GM10248 (cell line): ENCODE measurements at regions of chr17 and their contacts with region 1.

Region 1: DNA sequence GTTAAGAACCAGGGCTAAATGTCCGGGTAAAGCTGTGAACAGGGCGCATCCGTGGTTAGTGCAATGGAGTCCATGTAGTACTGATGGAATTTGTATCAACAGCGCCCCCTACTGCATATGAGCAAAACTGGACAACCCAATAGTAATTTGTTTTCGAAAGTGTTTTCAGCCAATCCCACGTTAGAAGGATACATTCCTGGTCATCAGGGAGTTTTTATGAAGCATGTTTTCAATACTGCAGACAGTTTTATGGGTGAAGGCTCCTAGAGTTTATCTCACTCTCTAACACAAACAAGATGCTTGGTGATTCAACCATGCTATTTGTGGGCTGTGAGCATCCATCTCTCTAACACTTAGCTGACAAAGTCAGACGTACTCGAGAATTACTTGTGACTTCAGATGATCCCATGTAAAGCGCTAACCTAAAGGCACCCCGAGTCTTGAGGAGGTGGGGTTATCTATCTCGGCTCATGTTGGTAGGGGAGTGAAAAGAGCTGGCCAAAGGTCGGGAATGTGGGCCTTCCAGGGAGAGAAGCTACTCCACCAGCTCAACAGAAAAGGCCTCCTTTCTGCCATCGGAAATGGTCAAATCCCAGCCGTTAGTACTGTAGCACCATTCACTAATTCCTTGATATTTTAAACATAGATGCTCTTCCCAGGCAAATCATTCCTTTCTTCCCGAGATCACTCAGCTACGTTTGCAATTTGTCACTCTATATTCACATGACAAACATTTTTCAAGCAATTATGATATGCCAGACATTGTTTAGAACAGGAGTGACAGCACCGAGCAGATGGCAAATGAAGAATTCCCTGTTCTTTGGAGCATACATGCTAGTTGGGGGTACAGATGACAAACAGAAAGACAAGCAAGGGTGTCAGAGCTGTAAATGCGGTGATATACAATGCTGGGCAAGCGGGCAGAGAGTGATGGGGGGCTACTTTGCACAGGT is 46.9 kb upstream of the HNF1B start:
- DNase-seq: peak; percentile 73
- CTCF ChIP-seq: peak; percentile 64

Region 2: GRCh38 chr17:37527249-37527851 is 264.4 kb before region 1 on chr17:
- CTCF ChIA-PET with region 1: interaction called, 12 read pairs
- POLR2A ChIA-PET with region 1: no interaction called
- DNase-seq: peak; percentile 38
- CTCF ChIP-seq: peak; percentile 60

Region 3: DNA sequence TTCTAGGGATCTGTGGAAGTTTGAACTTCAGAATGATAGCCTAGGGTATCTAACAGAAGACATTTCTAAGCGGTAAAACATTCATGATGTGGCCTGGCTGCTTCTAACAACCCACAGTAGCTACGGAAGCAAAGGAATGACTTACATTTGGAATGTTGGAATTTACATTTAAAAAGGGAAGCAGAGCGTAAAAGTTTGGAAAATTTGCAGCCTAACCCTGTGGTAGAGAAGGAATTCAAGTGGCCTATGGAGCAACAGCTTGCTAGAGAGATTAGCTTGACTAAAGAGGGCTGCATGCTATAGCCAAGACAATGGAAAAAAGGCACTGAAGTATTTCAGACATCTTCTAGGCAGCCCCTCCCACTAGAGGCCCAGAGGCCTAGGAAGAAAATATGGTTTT is 97.0 kb before region 1 on chr17:
- CTCF ChIA-PET with region 1: interaction called, 10 read pairs
- POLR2A ChIA-PET with region 1: no interaction called
- DNase-seq: no peak
- CTCF ChIP-seq: no peak

Region 4: GRCh38 chr17:37737081-37737480 is 54.6 kb before region 1 on chr17:
- CTCF ChIA-PET with region 1: interaction called, 14 read pairs
- POLR2A ChIA-PET with region 1: no interaction called
- DNase-seq: no peak
- CTCF ChIP-seq: no peak

Region 5: GRCh38 chr17:37770631-37771518 is 20.8 kb before region 1 on chr17:
- CTCF ChIA-PET with region 1: interaction called, 44 read pairs
- POLR2A ChIA-PET with region 1: no interaction called
- DNase-seq: no peak
- CTCF ChIP-seq: peak; percentile 63

Region 6: GRCh38 chr17:37802712-37803416 is 11.1 kb after region 1 on chr17:
- CTCF ChIA-PET with region 1: interaction called, 41 read pairs
- POLR2A ChIA-PET with region 1: no interaction called
- DNase-seq: no peak
- CTCF ChIP-seq: no peak